Activated naive CD4-positive, alpha-beta T cell treated with anti-CD3 and anti-CD28 coated beads for 36 hours (primary cell): ENCODE measurements at regions of chr16 and their contacts with region 1.

Region 1: GRCh38 chr16:70342016-70342415 is 4.7 kb upstream of the DDX19A start:
- DNase-seq: no peak
- H3K4me3 Mint-ChIP-seq: no peak overlapping the region
- H3K27ac Mint-ChIP-seq: no peak overlapping the region
- H3K4me1 Mint-ChIP-seq: peaks cover 8% of the 10 kb centered on the region
- H3K27me3 Mint-ChIP-seq: no peaks in the 10 kb centered on the region

Region 2: GRCh38 chr16:70289229-70290098 is 52.6 kb before region 1 on chr16 and contains the start of gene AARS1:
- CTCF ChIA-PET with region 1: interaction called, 4 read pairs
- intact Hi-C with region 1: loop called (anchors 1 kb)
- DNase-seq: peak; percentile 98
- H3K4me3 Mint-ChIP-seq: peak within 1 kb of the TSS; percentile 99
- H3K27ac Mint-ChIP-seq: peak within 1 kb of the TSS; percentile 99
- H3K4me1 Mint-ChIP-seq: peaks cover 34% of the 10 kb centered on the region
- H3K27me3 Mint-ChIP-seq: no peaks in the 10 kb centered on the region
- total RNA-seq, gene AARS1: 237 to 238 TPM

Region 3: DNA sequence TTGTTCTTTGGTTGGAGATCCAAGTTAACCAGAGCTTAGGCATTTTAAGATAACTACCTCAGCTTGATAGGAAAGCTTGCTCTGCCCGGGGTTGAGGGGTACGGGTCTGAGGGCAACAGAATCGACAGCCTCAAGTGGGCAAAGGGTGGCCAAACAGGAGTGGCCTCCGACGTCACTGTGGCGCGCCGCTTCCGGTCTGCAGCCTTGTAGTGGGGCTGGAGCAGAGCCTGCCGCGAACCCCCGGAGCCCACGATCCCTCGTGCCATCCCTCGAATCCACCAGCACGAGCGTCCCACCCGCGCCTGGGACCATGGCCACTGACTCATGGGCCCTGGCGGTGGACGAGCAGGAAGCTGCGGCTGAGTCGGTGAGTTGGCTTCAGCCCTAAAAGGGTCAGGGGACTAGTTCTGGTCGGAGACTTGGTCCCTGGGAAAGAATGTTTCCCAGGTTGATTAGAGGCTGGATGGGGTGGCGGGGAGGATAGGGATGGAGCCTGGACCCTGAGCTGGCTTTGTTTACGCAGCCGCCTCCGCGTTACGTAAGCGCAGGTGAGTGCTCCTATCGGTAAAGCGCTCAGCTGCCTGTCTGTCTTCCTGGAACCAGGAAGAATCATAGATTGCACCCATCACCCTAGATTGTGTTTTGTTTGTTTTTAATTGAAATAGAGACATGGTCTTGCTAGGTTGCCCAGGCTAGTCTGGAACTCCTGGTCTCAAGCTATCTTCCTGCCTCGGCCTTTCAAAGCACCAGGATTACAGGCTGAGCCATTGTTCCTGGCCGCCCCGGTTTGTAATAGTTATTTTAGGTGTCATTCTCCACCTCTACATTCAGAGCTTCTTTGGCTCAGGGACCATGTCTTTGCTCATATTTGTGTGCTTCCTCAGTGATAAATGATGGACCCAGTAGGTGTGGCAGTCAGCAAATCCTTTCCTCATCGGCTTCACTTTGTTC is 42.8 kb before region 1 on chr16 and contains the start of gene DDX19B:
- CTCF ChIA-PET with region 1: interaction called, 7 read pairs
- intact Hi-C with region 1: loop called (anchors 1 kb)
- DNase-seq: peak; percentile 78
- H3K4me3 Mint-ChIP-seq: peak within 1 kb of the TSS; percentile 89
- H3K27ac Mint-ChIP-seq: peak within 1 kb of the TSS; percentile 92
- H3K4me1 Mint-ChIP-seq: peaks cover 41% of the 10 kb centered on the region
- H3K27me3 Mint-ChIP-seq: no peaks in the 10 kb centered on the region
- total RNA-seq, gene DDX19B: 28.7 to 31.3 TPM

Region 4: DNA sequence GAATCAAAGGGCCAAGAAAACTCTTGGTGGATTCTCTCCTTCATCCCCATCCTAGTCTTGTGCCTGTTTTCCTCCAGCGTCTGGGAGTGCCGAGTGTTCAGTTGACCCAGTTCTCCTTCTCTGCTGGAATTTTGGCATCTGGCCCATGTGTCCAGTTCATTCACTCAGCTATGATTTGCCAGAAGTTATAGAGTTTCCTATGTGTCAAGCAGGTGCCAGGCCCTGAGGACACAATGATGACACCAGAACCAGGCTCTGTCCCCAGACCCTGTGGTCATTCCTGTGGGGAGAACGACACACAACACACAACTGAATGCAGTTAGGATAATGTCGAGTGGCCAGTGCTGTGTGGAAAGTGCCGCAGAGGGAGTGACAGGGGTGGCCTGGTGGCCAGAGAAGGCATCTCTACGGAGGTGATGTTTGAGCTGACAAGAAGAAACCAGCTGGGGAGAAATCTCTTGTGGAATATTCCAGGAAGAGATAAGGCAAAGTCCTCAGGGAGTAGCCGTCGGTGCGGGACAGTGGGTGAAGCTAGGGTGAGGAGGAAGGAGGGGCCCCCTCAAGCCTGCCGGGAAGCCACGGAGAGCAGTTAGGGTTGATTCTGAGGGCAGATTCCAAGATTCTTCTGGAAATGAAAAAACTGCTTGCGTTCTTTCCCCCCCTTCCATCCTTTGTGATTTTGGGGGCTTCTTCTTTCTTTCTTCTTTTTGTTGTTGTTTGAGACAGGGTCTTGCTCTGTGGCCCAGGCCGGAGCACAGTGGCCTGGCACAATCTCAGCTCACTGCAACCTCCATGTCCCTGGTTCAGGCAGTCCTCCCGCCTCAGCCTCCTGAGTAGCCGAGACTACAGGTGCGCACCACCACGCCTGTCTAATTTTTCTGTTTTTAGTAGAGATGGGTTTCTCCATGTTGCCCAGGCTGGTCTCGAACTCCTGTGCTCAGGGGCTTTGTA is 268.5 kb after region 1 on chr16:
- CTCF ChIA-PET with region 1: no interaction called
- intact Hi-C with region 1: no loop called
- DNase-seq: no peak
- H3K4me3 Mint-ChIP-seq: no peak overlapping the region
- H3K27ac Mint-ChIP-seq: no peak overlapping the region
- H3K4me1 Mint-ChIP-seq: no peaks in the 10 kb centered on the region
- H3K27me3 Mint-ChIP-seq: no peaks in the 10 kb centered on the region